Transverse colon (tissue), 4 donors: ENCODE measurements at regions of chr5 and their contacts with region 1.

Region 1: GRCh38 chr5:81171769-81172168 is 61.4 kb upstream of the CKMT2 start:
- DNase-seq: peak; percentile 13
- H3K4me3 ChIP-seq: no peak overlapping the region
- H3K27ac ChIP-seq: no peak overlapping the region
- H3K4me1 ChIP-seq: peaks cover 0 to 4% (median 2%) of the 10 kb centered on the region in 4 donors
- H3K27me3 ChIP-seq: no peaks in the 10 kb centered on the region
- CTCF ChIP-seq: no peak
- EP300 ChIP-seq: no peak
- POLR2A ChIP-seq: no peak

Region 2: GRCh38 chr5:79423296-79423695 is 1748.5 kb before region 1 on chr5:
- in situ Hi-C with region 1: no loop called
- intact Hi-C with region 1: loop called (anchors 10 kb)
- DNase-seq: no peak
- H3K4me3 ChIP-seq: no peak overlapping the region
- H3K27ac ChIP-seq: no peak overlapping the region
- H3K4me1 ChIP-seq: no peaks in the 10 kb centered on the region
- H3K27me3 ChIP-seq: no peaks in the 10 kb centered on the region
- CTCF ChIP-seq: no peak
- EP300 ChIP-seq: no peak
- POLR2A ChIP-seq: no peak

Region 3: DNA sequence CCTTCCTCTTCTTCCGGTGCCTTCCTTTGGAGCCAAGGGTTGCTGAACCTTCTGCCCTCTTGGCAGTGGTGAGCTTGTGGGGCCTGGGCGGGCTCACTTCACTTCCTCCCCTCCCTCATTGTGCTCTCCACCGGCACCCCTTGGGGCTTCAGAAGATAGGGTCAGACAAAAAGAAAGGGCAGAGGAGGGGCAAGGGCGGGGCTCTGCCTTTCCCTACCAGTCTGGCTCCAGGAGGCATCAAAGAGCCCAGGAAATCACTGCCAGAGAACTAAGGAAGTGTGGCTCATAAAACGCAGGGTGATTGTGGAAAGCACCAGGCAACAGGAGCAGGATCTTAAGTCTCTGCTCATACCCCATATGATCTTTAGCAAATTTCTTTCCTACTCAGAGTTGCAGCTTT is 187.3 kb after region 1 on chr5:
- in situ Hi-C with region 1: no loop called
- intact Hi-C with region 1: no loop called
- DNase-seq: no peak
- H3K4me3 ChIP-seq: no peak overlapping the region
- H3K27ac ChIP-seq: no peak overlapping the region
- H3K4me1 ChIP-seq: peaks cover 0 to 26% (median 0%) of the 10 kb centered on the region in 4 donors
- H3K27me3 ChIP-seq: no peaks in the 10 kb centered on the region
- CTCF ChIP-seq: no peak
- EP300 ChIP-seq: no peak
- POLR2A ChIP-seq: no peak